ENCODE measurements at regions of chr15 and their contacts with region 1.

Region 1: GRCh38 chr15:67863442-67863987 is 23.7 kb upstream of the RNU6-1 start:
- DNase-seq: peak; percentile 39 to 72
- H3K4me3 ChIP-seq: peak overlapping the region; percentile 58; the same call in 1 of the 2 replicates
- H3K27ac ChIP-seq: no peak overlapping the region
- H3K4me1 ChIP-seq: no peaks in the 10 kb centered on the region
- H3K27me3 ChIP-seq: no peaks in the 10 kb centered on the region
- CTCF ChIP-seq: peak; percentile 86

Region 2: GRCh38 chr15:68031404-68031803 is 167.9 kb after region 1 on chr15:
- CTCF ChIA-PET with region 1: no interaction called
- POLR2A ChIA-PET with region 1: no interaction called
- intact Hi-C with region 1: no loop called
- DNase-seq: no peak
- H3K4me3 ChIP-seq: no peak overlapping the region
- H3K27ac ChIP-seq: no peak overlapping the region
- H3K4me1 ChIP-seq: no peaks in the 10 kb centered on the region
- H3K27me3 ChIP-seq: no peaks in the 10 kb centered on the region
- CTCF ChIP-seq: no peak

Region 3: DNA sequence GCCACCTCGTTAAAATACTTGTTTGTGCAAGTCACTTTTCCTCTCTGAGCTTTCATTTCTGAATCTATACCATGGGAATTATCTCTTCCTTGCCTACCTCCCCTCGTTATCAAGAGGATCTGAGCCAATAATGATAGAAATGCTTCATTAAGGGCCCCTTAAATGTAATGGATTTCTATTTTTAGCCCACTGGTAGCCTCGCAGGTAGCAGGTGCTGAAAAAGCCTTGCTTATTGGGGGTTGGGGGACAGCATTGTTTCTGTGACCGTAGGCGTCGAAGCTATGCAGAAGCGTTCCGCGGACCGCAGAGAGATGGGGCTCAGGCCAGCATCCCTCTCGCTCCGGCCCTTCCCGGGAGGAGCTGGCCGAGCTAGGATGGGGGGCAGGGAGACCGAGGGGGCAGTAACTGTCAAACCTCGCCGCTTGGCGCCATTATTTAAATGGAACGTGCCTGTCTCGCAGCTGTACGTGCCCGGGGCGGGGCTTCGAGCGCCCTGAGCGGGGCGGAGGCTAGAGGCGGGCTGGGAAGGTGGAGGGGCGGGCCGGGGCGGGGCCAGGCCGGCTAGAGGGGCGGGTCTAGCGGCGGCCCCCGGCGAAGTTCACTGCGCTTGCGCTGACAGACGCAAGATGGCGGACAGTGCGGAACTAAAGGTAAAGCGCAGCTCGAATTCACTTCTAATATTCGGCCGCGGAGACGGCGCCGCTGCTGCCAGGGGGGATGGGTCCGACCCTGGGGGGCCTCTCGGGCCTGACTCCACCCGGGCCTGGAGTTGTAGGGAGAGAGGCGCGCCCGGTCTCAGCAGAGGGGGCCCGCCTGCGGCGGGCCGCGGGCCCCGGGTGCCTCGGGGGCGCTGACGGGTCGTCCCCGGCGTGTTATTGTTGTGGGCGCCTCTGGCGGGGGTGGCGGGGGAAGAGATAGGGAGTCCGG is 190.4 kb after region 1 on chr15 and contains the start of gene PIAS1:
- CTCF ChIA-PET with region 1: no interaction called
- POLR2A ChIA-PET with region 1: interaction called, 4 read pairs
- intact Hi-C with region 1: loop called (anchors 10 kb)
- DNase-seq: peak; percentile 67 to 91
- H3K4me3 ChIP-seq: peak within 1 kb of the TSS; percentile 84
- H3K27ac ChIP-seq: peak within 1 kb of the TSS; percentile 32; the same call in 1 of the 2 replicates
- H3K4me1 ChIP-seq: peaks cover 23% of the 10 kb centered on the region; the same call in 1 of the 2 replicates
- H3K27me3 ChIP-seq: no peaks in the 10 kb centered on the region
- CTCF ChIP-seq: no peak
- total RNA-seq, gene PIAS1: 42.2 and 42.5 TPM in 2 replicates